Activated CD4-positive, alpha-beta T cell treated with anti-CD3 and anti-CD28 coated beads for 36 hours (primary cell): ENCODE measurements at regions of chr6 and their contacts with region 1.

Region 1: DNA sequence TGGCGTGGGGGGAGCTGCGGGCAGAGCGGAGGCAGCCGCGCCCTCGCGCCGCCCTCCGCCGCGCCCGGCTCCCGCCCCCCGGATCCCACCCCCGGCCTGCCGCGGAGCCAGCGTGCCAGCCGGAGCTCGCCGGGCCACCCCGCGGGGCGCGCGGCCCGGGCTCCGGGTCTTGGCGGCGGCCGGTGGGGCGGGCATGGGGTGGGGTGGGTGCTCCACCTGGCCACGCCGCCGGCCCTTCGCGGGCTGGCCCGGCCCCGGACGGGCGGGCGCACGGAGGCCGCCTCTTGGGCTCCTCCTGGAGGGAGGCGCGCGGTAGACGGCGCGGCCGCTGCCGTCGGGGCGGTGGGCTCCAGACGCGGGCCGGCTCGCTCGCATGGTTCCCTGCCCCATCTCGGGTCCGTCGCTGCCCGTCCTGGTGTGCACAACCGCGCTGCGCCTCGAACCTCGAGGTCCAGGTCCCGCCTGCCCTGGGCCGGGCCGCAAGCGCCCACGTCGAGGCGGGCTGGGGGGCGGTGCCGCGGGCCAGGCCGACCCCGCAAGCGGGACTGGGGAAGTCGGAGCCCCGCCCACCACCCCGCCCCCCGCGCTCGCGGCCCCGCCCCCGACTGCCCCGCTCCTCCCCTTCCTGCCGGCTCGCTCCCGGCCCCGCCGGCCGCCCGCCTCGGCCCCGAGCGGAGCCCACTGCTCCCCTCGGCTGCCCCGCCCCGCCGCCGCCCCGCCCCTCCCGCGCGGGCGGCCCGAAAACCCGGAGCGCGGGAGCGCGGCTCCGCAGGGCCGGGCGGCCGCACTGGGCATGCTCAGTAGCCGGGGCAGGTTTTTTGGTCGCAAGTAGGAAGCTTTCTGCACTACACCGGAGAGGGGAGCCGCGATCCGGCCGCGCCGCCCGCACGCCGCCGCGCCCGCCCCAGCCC is at the start of gene CDYL:
- DNase-seq: peak; percentile 93
- ATAC-seq: peak; percentile 79
- H3K4me3 Mint-ChIP-seq: peak within 1 kb of the TSS; percentile 81
- H3K27ac Mint-ChIP-seq: peak within 1 kb of the TSS; percentile 92
- H3K4me1 Mint-ChIP-seq: peaks cover 54% of the 10 kb centered on the region
- H3K27me3 Mint-ChIP-seq: peaks cover 11% of the 10 kb centered on the region
- total RNA-seq, gene CDYL: 22.1 to 33.7 TPM

Region 2: GRCh38 chr6:4135665-4136353 is 640.0 kb before region 1 on chr6:
- CTCF ChIA-PET with region 1: no interaction called
- POLR2A ChIA-PET with region 1: no interaction called
- intact Hi-C with region 1: loop called in 1 of 2 experiments (anchors 2 kb)
- DNase-seq: peak; percentile 98
- ATAC-seq: peak; percentile 92
- H3K4me3 Mint-ChIP-seq: peak overlapping the region; percentile 79
- H3K27ac Mint-ChIP-seq: peak overlapping the region; percentile 85
- H3K4me1 Mint-ChIP-seq: peaks cover 46% of the 10 kb centered on the region
- H3K27me3 Mint-ChIP-seq: no peaks in the 10 kb centered on the region

Region 3: GRCh38 chr6:4553387-4553786 is 222.5 kb before region 1 on chr6:
- CTCF ChIA-PET with region 1: no interaction called
- POLR2A ChIA-PET with region 1: no interaction called
- intact Hi-C with region 1: no loop called
- DNase-seq: peak; percentile 27
- ATAC-seq: peak; percentile 74
- H3K4me3 Mint-ChIP-seq: no peak overlapping the region
- H3K27ac Mint-ChIP-seq: no peak overlapping the region
- H3K4me1 Mint-ChIP-seq: peaks cover 4% of the 10 kb centered on the region
- H3K27me3 Mint-ChIP-seq: peaks cover 22% of the 10 kb centered on the region

Region 4: GRCh38 chr6:4647414-4648365 is 128.1 kb before region 1 on chr6:
- CTCF ChIA-PET with region 1: no interaction called
- POLR2A ChIA-PET with region 1: no interaction called
- intact Hi-C with region 1: loop called in 1 of 2 experiments (anchors 5 kb)
- DNase-seq: peak; percentile 53
- ATAC-seq: peak; percentile 49
- H3K4me3 Mint-ChIP-seq: no peak overlapping the region
- H3K27ac Mint-ChIP-seq: peak overlapping the region; percentile 59
- H3K4me1 Mint-ChIP-seq: peaks cover 11% of the 10 kb centered on the region
- H3K27me3 Mint-ChIP-seq: peaks cover 44% of the 10 kb centered on the region

Region 5: DNA sequence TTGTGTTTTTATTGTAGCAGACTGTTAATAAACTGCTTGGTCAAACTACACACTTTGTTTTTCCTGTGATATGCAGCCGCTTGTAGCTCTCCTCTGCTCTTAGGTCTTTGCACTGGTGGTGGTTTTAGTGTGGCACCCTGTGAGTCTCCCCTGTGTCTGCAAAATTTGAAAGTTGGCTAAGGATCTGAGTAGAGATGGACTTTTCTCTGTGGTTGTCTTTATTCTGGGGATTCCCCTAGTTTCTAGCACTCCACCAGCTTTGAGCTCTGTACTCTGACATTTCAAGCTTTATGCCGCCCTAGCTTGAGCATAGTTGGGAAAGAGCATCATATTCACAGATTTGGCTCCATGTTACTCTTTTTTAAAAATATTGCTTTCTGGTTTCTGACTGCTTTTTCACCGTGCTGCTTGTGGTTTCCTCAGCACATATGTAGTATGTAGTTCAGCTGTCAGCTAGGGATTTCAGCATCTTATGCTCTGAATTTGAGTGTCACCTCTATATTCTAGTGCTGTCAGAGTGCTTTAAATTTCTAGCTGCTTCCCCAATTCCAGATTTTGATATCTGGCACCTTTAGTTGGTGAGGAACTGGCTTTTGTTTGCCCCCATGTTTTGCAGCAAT is 25.8 kb after region 1 on chr6:
- CTCF ChIA-PET with region 1: interaction called, 4 read pairs
- POLR2A ChIA-PET with region 1: no interaction called
- intact Hi-C with region 1: loop called in 1 of 2 experiments (anchors 2 kb)
- DNase-seq: peak; percentile 22
- ATAC-seq: peak; percentile 86
- H3K4me3 Mint-ChIP-seq: peak overlapping the region; percentile 16
- H3K27ac Mint-ChIP-seq: no peak overlapping the region
- H3K4me1 Mint-ChIP-seq: peaks cover 72% of the 10 kb centered on the region
- H3K27me3 Mint-ChIP-seq: no peaks in the 10 kb centered on the region

Region 6: DNA sequence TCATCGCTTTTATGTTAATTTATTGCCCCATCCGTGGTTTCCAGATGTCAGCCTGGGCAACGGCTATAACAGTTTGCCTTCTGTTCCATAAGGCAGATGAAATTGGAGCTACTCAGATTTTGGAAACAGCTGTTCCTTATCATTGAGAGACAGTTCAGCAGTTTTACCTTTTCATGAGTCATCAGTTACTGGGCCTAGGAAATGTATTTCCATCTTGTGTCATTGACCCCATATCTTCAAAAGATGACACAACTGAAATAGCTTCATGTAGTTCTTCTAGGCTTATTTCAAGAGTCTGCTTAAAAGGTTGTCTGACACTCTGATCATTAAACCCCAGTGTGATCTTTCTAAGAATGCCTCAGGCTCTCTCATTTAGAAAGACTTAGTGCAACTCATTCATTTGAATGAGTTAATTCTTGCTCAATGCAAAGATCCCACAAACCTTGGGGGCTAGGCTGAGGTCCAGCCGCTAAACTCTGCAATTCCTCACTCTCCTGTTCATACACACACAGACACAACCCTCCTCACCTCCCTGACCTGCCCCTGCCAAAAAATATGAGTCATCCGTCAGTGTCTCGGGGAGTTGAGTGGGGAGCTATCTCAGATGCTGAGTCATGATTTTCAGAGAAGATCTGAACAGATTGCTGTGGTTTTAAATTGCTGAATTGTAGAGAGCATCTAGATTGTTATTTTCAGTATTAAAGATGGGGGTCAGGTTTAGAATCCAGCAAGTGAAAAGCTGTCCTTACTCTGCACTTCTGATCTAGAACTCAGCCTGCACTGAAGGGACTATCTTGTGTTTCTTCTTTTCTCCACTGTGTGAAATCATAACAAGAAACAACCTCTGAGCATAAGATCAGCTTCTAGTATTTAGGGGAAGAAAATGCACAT is 166.2 kb after region 1 on chr6:
- CTCF ChIA-PET with region 1: interaction called, 3 read pairs
- POLR2A ChIA-PET with region 1: no interaction called
- intact Hi-C with region 1: loop called (anchors 2 to 5 kb)
- DNase-seq: peak; percentile 73
- ATAC-seq: peak; percentile 93
- H3K4me3 Mint-ChIP-seq: no peak overlapping the region
- H3K27ac Mint-ChIP-seq: peak overlapping the region; percentile 61
- H3K4me1 Mint-ChIP-seq: peaks cover 47% of the 10 kb centered on the region
- H3K27me3 Mint-ChIP-seq: no peaks in the 10 kb centered on the region

Region 7: GRCh38 chr6:5260661-5261544 is 485.1 kb after region 1 on chr6 and contains the starts of genes FARS2 and LYRM4:
- CTCF ChIA-PET with region 1: no interaction called
- POLR2A ChIA-PET with region 1: no interaction called
- intact Hi-C with region 1: loop called in 1 of 2 experiments (anchors 1 kb)
- DNase-seq: peak; percentile 94
- ATAC-seq: peak; percentile 80
- H3K4me3 Mint-ChIP-seq: peak within 1 kb of the TSS; percentile 92
- H3K27ac Mint-ChIP-seq: peak within 1 kb of the TSS; percentile 97
- H3K4me1 Mint-ChIP-seq: peaks cover 36% of the 10 kb centered on the region
- H3K27me3 Mint-ChIP-seq: no peaks in the 10 kb centered on the region
- total RNA-seq, gene FARS2: 17.6 to 18.4 TPM
- total RNA-seq, gene LYRM4: 46.4 to 53.4 TPM